IMR-90 (cell line): ENCODE measurements at regions of chr18 and their contacts with region 1.

Region 1: GRCh38 chr18:23745366-23745765 is 56.1 kb downstream of the LAMA3 start:
- DNase-seq: no peak
- ATAC-seq: no peak
- H3K4me3 ChIP-seq: no peak overlapping the region
- H3K27ac ChIP-seq: no peak overlapping the region
- H3K4me1 ChIP-seq: peaks cover 2% of the 10 kb centered on the region; the same call in 1 of the 2 replicates
- H3K27me3 ChIP-seq: peaks cover 18% of the 10 kb centered on the region
- CTCF ChIP-seq: no peak
- POLR2A ChIP-seq: no peak
- RAD21 ChIP-seq: no peak

Region 2: GRCh38 chr18:23798249-23798648 is 52.9 kb after region 1 on chr18:
- CTCF ChIA-PET with region 1: no interaction called
- POLR2A ChIA-PET with region 1: no interaction called
- dilution Hi-C with region 1: no loop called
- in situ Hi-C with region 1: no loop called
- intact Hi-C with region 1: loop called (anchors 5 kb)
- DNase-seq: no peak
- ATAC-seq: no peak
- H3K4me3 ChIP-seq: no peak overlapping the region
- H3K27ac ChIP-seq: no peak overlapping the region
- H3K4me1 ChIP-seq: no peaks in the 10 kb centered on the region
- H3K27me3 ChIP-seq: peaks cover 23% of the 10 kb centered on the region
- CTCF ChIP-seq: no peak
- POLR2A ChIP-seq: no peak
- RAD21 ChIP-seq: no peak